ENCODE measurements at regions of chr2 and their contacts with region 1.

Region 1: DNA sequence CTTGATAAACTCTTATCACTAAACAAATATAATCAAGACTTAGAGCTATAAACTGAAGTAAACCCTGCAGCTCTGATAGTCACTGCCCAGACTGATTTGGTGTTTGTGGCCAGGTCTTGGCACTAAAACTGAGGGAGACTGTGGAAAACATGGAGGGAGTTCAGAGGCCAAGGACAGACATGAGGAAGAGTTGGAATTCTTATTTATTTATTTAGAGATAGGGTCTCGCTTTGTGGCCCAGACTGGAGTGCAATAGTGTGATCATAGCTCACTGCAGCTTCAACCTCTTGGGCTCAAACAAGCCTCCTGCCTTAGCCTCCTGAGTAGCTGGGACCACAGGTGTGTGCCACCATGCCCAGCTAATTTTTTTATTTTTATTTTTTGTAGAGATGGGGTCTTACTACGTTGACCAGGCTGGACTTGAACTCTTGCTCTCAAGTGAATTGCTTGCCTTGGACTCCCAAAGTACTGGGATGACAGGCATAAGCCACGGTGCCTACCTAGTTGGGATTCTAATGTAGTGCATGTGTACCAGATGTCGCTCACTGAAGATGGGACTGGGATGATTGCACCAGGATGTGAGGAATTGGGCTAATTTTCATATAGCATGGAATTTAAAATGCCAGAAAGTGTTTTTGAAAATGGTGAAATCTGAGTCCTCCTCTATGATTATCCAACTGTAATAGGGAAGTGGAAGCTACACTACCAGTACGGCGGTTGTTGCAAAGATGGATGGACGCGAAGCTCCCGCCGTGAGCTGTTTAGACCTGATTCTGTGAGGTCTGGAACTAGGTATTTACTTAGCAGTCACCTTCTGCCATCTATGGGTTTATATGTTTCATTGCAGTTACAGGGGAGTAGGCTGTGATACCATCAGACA is 52.7 kb upstream of the CTLA4 start:
- DNase-seq: peak; percentile 27 to 40
- ATAC-seq: peak; percentile 77 to 79
- H3K4me3 ChIP-seq: no peak overlapping the region
- H3K27ac ChIP-seq: no peak overlapping the region
- H3K4me1 ChIP-seq: peaks cover 9 to 35% of the 10 kb centered on the region in 2 donors
- H3K27me3 ChIP-seq: no peaks in the 10 kb centered on the region
- CTCF ChIP-seq: peak; percentile 59 to 85 (median 76)
- POLR2A ChIP-seq: no peak

Region 2: GRCh38 chr2:203195331-203196036 is 619.4 kb before region 1 on chr2:
- in situ Hi-C with region 1: no loop called
- intact Hi-C with region 1: no loop called
- DNase-seq: no peak
- ATAC-seq: no peak
- H3K4me3 ChIP-seq: no peak overlapping the region
- H3K27ac ChIP-seq: no peak overlapping the region
- H3K4me1 ChIP-seq: no peaks in the 10 kb centered on the region
- H3K27me3 ChIP-seq: no peaks in the 10 kb centered on the region
- CTCF ChIP-seq: no peak
- POLR2A ChIP-seq: no peak

Region 3: GRCh38 chr2:203238704-203239526 is 576.0 kb before region 1 on chr2 and contains the start of gene CYP20A1:
- in situ Hi-C with region 1: loop called in 2 of 4 experiments (anchors 25 kb)
- intact Hi-C with region 1: loop called (anchors 5 kb)
- DNase-seq: peak; percentile 90 to 94
- ATAC-seq: peak; percentile 96
- H3K4me3 ChIP-seq: peak within 1 kb of the TSS; percentile 79 to 97 (median 81)
- H3K27ac ChIP-seq: peak within 1 kb of the TSS; percentile 92 to 99 (median 96)
- H3K4me1 ChIP-seq: peaks cover 12 to 16% of the 10 kb centered on the region in 2 donors
- H3K27me3 ChIP-seq: no peaks in the 10 kb centered on the region
- CTCF ChIP-seq: peak in 4 of 5 experiments; percentile 41 to 55 (median 52)
- POLR2A ChIP-seq: peak; percentile 84 to 88
- total RNA-seq, gene CYP20A1: 12.4 to 24.4 (median 17.7) TPM

Region 4: GRCh38 chr2:203484266-203485112 is 330.4 kb before region 1 on chr2:
- in situ Hi-C with region 1: loop called in 2 of 4 experiments (anchors 10 to 25 kb)
- intact Hi-C with region 1: loop called (anchors 1 kb)
- DNase-seq: peak; percentile 14 to 28
- ATAC-seq: peak; percentile 85
- H3K4me3 ChIP-seq: no peak overlapping the region
- H3K27ac ChIP-seq: no peak overlapping the region
- H3K4me1 ChIP-seq: peaks cover 0 to 6% of the 10 kb centered on the region in 2 donors
- H3K27me3 ChIP-seq: no peaks in the 10 kb centered on the region
- CTCF ChIP-seq: peak; percentile 53 to 78 (median 68)
- POLR2A ChIP-seq: no peak

Region 5: GRCh38 chr2:203498161-203498560 is 316.7 kb before region 1 on chr2:
- in situ Hi-C with region 1: loop called in 2 of 4 experiments (anchors 10 to 25 kb)
- intact Hi-C with region 1: no loop called
- DNase-seq: no peak
- ATAC-seq: peak in 1 of 2 donors; percentile 19
- H3K4me3 ChIP-seq: no peak overlapping the region
- H3K27ac ChIP-seq: no peak overlapping the region
- H3K4me1 ChIP-seq: peaks cover 0 to 25% of the 10 kb centered on the region in 2 donors
- H3K27me3 ChIP-seq: no peaks in the 10 kb centered on the region
- CTCF ChIP-seq: no peak
- POLR2A ChIP-seq: no peak

Region 6: GRCh38 chr2:203650860-203651613 is 163.9 kb before region 1 on chr2:
- in situ Hi-C with region 1: loop called in 1 of 4 experiments (anchors 10 kb)
- intact Hi-C with region 1: no loop called
- DNase-seq: peak; percentile 28 to 29
- ATAC-seq: peak; percentile 82 to 90
- H3K4me3 ChIP-seq: no peak overlapping the region
- H3K27ac ChIP-seq: peak overlapping the region in 3 of 4 donors; percentile 52 to 64 (median 54)
- H3K4me1 ChIP-seq: peaks cover 20 to 36% of the 10 kb centered on the region in 2 donors
- H3K27me3 ChIP-seq: no peaks in the 10 kb centered on the region
- CTCF ChIP-seq: peak in 4 of 5 experiments; percentile 10 to 45 (median 42)
- POLR2A ChIP-seq: no peak

Region 7: GRCh38 chr2:203740780-203741281 is 74.1 kb before region 1 on chr2:
- in situ Hi-C with region 1: no loop called
- intact Hi-C with region 1: loop called (anchors 5 kb)
- DNase-seq: no peak
- ATAC-seq: no peak
- H3K4me3 ChIP-seq: no peak overlapping the region
- H3K27ac ChIP-seq: peak overlapping the region in 2 of 4 donors; percentile 20 to 38
- H3K4me1 ChIP-seq: peaks cover 3 to 16% of the 10 kb centered on the region in 2 donors
- H3K27me3 ChIP-seq: no peaks in the 10 kb centered on the region
- CTCF ChIP-seq: no peak
- POLR2A ChIP-seq: no peak